Thyroid gland (tissue), 4 donors: ENCODE measurements at regions of chr21 and their contacts with region 1.

Region 1: DNA sequence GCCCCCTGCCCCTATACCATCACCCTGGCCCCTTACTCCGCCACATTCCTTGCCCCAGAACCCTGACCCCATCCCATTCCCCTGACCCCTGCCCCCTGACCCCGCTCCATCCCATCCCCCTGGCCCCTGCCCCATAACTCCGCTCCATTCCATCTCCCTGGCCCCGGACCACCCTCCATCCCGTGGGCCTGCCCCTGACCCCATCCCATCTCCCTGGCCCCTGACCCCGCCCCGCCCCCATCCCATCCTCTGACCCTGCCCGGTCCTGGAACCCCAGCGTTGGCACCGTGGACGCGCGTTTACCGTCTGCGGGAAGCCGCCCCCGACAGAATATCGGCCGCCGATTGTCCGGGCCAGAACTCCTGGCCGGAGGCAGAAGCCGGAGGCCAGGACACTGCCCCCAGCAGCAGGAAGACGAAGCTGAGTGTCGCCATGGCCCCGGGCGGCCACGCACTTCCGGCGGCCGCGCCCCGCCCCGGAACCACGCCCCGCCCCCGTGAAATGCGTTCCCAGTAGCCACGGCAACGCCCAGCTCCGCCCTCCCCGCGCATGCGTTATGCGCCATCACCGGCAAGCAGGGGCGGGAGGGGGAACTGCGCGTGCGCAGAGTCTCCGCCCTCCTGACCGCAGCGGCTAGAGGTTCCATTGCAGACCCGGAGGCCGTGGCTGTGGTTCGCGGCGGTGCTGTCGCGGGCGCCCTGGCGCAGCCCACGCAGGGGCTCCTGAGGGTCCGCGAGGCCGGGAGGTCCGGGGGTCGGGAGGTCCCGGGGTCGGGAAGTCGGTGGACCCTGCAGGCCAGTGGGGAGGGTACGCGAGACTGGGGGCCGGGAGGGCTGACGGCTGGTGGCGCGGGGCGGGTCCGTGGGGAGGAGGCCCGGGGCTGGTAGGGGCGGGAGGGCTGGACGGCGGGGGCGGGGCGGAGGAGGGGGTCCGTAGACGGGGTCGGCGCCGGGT is at the start of gene POFUT2:
- DNase-seq: peak; percentile 96 to 97
- H3K4me3 ChIP-seq: peak within 1 kb of the TSS in 2 of 3 donors; percentile 45 to 90
- H3K27ac ChIP-seq: peak within 1 kb of the TSS; percentile 50 to 80 (median 66)
- H3K4me1 ChIP-seq: peaks cover 17 to 29% of the 10 kb centered on the region in 2 donors
- H3K27me3 ChIP-seq: no peaks in the 10 kb centered on the region
- CTCF ChIP-seq: peak in 1 of 6 experiments; percentile 4
- POLR2A ChIP-seq: peak in 1 of 2 donors; percentile 88
- total RNA-seq, gene POFUT2: 20.2 to 52.2 (median 40.5) TPM

Region 2: DNA sequence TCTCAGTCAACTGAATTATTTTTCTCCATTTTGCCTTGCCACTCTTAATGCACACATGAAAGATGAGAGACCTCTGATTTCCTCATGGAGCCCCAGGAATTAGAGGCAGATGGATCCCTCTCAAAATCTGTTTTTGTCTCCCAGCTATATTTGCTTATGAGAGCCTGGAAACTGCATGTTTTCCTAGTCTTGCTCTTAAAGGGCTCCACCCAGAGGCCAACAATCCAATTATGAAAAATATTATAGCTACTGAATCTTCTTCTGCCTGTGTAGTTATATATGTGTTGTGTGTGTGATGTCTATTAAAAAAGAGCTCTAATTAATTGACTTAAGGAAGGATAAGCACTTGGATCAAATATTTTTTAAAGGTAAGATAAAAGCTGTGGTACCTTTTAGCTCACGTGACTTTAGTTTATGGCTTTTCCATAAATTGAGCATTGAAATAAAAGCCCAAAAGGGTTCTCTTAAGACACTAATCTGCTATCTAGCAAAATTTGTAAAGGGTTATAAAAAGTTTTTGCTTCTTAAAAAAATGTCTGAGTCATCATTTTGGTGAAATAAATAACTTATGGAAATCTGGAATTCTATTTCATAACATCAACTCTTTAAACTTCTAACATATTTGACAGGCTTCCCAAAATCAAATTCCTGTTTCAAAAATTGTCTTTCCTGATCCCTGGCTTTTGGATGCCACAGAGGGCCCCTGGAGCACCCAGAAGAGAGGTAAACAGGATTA is 545.1 kb before region 1 on chr21:
- intact Hi-C with region 1: no loop called
- DNase-seq: no peak
- H3K4me3 ChIP-seq: no peak overlapping the region
- H3K27ac ChIP-seq: no peak overlapping the region
- H3K4me1 ChIP-seq: no peaks in the 10 kb centered on the region
- H3K27me3 ChIP-seq: no peaks in the 10 kb centered on the region
- CTCF ChIP-seq: peak in 2 of 6 experiments; percentile 15 to 38
- POLR2A ChIP-seq: no peak

Region 3: DNA sequence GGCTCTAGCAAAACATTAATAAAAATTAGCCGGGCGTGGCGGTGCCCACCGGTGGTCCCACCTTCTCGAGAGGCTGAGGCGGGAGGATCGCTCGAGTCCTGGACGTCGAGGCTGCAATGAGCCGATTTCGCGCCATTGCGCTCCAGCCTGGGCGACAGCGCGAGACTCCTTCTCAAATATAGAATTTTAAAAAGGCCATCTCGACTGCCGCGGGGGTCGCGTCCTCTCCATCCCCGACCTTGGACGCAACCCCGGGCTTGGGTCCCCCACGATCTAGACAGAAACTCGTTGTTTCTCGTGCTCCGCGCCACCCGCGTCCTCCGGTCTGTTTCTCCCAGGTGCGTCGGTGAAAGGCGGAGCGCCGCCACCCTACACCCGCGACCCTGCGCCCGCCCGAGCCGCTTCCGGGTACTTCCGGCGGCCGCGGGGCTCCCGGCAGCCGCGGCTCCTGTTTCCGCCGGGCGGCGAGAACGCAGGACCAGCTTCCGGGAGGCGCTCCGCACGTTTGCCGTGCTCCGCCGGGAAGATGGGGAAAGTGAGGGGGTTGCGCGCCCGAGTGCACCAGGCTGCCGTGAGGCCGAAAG is 348.1 kb before region 1 on chr21 and contains the start of gene SLX9:
- intact Hi-C with region 1: loop called (anchors 10 kb)
- DNase-seq: peak; percentile 70 to 74
- H3K4me3 ChIP-seq: peak within 1 kb of the TSS; percentile 25 to 96 (median 72)
- H3K27ac ChIP-seq: peak within 1 kb of the TSS in 2 of 3 donors; percentile 7 to 10
- H3K4me1 ChIP-seq: peaks cover 15 to 22% of the 10 kb centered on the region in 2 donors
- H3K27me3 ChIP-seq: no peaks in the 10 kb centered on the region
- CTCF ChIP-seq: no peak
- POLR2A ChIP-seq: peak in 1 of 2 donors; percentile 58
- total RNA-seq, gene SLX9: 4.8 to 19.1 (median 11.2) TPM

Region 4: DNA sequence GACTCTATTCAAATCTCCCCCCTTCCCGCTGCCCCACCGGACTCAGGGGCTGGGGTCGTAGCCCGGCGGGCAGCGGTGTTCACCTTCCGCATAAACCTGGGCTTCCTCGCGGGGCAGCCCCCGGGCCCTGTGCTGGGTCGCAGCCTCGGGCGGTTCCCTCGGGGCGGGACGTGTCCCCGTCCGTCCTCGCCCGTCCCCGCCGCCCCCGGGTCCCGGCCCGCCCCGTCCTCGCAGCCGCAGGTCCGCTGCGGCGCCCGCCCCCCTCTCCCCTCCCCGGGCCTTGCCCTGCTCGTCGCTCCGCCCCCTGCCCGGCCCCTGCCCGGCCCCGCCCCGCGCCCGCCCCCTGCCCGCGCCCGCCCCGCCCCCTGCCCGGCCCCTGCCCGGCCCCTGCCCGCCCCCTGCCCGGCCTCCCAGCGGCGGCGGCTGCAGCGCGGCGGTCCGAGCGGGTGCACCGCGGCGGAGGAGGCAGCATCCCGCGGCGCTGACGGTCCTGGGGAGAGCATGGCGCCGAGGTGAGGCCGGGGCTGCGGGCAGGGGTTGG is 117.1 kb after region 1 on chr21 and contains the start of gene COL18A1:
- intact Hi-C with region 1: loop called (anchors 5 kb)
- DNase-seq: peak; percentile 74 to 79
- H3K4me3 ChIP-seq: peak within 1 kb of the TSS; percentile 28 to 68 (median 34)
- H3K27ac ChIP-seq: peak within 1 kb of the TSS; percentile 52 to 82 (median 76)
- H3K4me1 ChIP-seq: peaks cover 16 to 39% of the 10 kb centered on the region in 2 donors
- H3K27me3 ChIP-seq: no peaks in the 10 kb centered on the region
- CTCF ChIP-seq: no peak
- POLR2A ChIP-seq: no peak
- total RNA-seq, gene COL18A1: 105 to 264 (median 238) TPM

Region 5: DNA sequence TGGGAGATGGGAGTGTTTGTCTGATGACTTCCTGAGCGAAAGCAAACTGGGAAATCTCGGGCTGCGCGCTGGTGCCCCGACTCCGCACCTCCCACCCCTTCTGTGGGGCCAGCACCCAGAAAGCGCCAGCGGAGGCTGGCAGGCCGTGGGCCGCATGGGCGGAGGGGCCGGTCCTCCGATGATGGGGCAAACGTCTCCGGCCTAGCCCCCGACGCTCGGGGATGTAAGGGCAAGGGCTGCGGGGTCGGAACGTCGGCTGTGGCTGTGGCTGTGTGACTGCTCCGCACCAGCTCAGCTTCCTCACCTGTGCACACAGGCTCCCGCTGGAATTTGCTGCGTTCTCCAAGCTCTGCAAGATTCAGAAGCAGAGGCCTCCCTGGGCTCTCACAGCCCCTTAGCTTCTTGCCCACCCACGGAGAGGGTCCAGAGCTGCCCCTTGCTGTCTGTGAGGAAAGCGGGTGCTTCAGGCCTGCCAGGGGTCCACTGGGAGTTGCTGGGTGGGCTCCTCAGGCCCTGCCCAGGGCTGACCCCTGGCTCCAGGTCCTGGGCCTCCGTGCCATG is 152.3 kb after region 1 on chr21:
- intact Hi-C with region 1: loop called (anchors 2 kb)
- DNase-seq: no peak
- H3K4me3 ChIP-seq: no peak overlapping the region
- H3K27ac ChIP-seq: no peak overlapping the region
- H3K4me1 ChIP-seq: peaks cover 7 to 26% of the 10 kb centered on the region in 2 donors
- H3K27me3 ChIP-seq: no peaks in the 10 kb centered on the region
- CTCF ChIP-seq: no peak
- POLR2A ChIP-seq: no peak

Region 6: DNA sequence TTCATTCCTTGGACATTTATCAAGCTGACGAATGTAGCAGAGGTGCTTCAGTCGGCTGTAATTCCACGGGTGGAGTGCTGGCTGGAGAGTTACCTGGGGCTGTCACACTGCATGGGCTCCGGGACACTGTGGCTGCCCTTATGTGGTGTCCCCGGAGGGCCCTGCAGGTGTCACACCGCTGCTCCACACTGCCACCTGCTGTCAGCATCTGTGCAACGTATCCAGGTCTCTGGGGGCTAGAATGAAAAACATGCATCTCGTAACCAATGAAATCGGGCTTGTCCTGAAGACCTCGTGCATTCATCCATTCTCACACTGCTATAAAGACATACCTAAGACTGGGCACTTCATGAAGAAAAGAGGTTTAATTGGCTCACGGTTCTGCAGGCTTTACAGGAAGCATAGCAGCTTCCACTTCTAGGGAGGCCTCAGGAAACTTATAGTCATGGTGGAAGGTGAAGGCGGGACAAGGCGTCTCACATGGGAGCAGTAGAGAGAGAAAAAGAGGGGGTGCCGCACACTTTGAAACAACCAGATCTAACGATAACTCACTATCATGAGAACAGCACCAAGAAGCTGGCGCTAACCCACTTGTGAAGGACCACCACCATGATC is 309.1 kb after region 1 on chr21:
- intact Hi-C with region 1: loop called (anchors 10 kb)
- DNase-seq: peak; percentile 77 to 84
- H3K4me3 ChIP-seq: no peak overlapping the region
- H3K27ac ChIP-seq: no peak overlapping the region
- H3K4me1 ChIP-seq: peaks cover 0 to 7% of the 10 kb centered on the region in 2 donors
- H3K27me3 ChIP-seq: no peaks in the 10 kb centered on the region
- CTCF ChIP-seq: peak; percentile 56 to 95 (median 82)
- POLR2A ChIP-seq: no peak